MCF 10A (cell line): ENCODE measurements at regions of chr16 and their contacts with region 1.

Region 1: DNA sequence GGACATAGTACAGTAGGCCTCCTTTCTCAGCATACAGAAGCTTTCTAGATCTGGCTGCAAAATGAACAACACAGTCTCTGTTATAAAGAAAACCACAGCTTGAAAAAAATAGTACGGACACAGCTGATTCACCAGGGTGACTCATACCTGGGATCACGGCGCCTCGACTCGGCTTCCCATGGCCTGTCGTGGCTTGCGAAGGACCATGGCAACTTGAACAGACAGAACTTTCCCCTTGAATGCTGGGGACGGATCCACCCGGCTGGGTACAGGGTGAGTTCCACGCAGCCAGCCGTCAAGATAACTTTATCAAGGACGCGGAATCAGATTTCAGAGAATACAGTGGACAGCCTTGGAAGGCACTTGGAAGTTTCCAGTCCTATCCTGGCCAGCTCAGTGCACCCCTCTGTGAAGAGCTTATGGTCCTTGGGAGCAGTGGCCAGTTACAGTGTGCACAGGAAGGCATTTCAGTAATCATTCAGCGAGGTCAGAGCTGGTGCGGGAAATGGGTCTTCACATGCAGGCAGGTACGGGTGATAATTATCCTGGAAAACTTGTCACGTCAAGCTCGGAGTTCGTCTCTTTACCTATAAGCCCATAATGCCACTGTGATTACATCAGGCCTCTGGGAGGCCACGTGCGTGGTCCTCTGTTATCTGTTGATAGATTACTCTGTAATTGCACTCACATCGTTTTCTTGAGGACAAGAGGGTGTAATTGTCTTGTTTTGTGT is 57.9 kb upstream of the MAF start:
- DNase-seq: peak; percentile 91
- H3K4me3 Mint-ChIP-seq: peak overlapping the region; percentile 40
- H3K27ac Mint-ChIP-seq: no peak overlapping the region
- H3K4me1 Mint-ChIP-seq: peaks cover 17% of the 10 kb centered on the region
- H3K27me3 Mint-ChIP-seq: no peaks in the 10 kb centered on the region
- CTCF ChIP-seq: no peak

Region 2: GRCh38 chr16:79613009-79613408 is 45.5 kb before region 1 on chr16:
- CTCF ChIA-PET with region 1: interaction called, 4 read pairs
- POLR2A ChIA-PET with region 1: interaction called, 3 read pairs
- intact Hi-C with region 1: loop called (anchors 2 kb)
- DNase-seq: peak; percentile 41
- H3K4me3 Mint-ChIP-seq: no peak overlapping the region
- H3K27ac Mint-ChIP-seq: peak overlapping the region; percentile 74
- H3K4me1 Mint-ChIP-seq: peaks cover 40% of the 10 kb centered on the region
- H3K27me3 Mint-ChIP-seq: no peaks in the 10 kb centered on the region
- CTCF ChIP-seq: no peak